Mammary epithelial cell (primary cell): ENCODE measurements at regions of chr5 and their contacts with region 1.

Region 1: DNA sequence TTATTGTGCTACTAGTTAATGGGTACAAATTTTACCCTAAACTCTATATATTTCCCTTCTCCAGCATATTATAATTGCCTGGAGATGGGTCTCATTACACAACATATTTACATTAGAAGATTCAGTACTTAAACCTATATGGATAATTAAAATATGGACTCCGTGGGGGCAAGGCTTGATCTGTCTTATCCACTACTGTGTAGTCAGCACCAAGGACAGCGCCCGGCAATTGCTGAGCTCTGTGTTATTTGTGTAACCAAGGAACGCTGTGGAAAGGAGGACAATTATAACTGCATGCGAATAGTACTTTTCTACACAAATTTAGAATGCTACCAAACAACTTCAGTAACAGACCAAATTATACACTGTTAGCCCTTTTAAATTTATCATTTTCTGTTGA is 77.7 kb downstream of the DNAH5 start:
- DNase-seq: peak; percentile 19
- H3K4me3 ChIP-seq: no peak overlapping the region
- H3K27ac ChIP-seq: no peak overlapping the region
- H3K4me1 ChIP-seq: no peaks in the 10 kb centered on the region
- H3K27me3 ChIP-seq: no peaks in the 10 kb centered on the region
- CTCF ChIP-seq: no peak

Region 2: DNA sequence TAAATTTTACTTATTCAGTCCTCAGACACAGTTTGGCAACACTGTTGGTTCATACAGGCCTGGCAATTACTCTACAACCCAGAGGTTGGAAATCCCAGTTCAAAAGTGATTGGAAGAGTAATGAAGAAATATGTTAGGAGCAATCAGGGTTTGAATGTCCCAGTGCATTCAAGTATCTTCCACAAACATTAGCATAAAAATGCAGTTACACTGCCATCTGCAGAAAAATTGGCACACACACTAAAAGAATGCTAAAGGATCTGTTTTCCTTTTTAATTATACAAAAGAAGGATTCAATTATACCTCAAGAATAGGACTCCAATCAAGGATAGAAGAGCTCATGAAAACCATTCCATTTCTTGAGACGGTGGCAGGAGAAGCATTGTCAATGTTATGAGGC is 52.5 kb before region 1 on chr5:
- CTCF ChIA-PET with region 1: no interaction called
- dilution Hi-C with region 1: no loop called
- in situ Hi-C with region 1: no loop called
- intact Hi-C with region 1: no loop called
- DNase-seq: peak; percentile 33
- H3K4me3 ChIP-seq: no peak overlapping the region
- H3K27ac ChIP-seq: no peak overlapping the region
- H3K4me1 ChIP-seq: peaks cover 2% of the 10 kb centered on the region
- H3K27me3 ChIP-seq: no peaks in the 10 kb centered on the region
- CTCF ChIP-seq: peak; percentile 22 to 47

Region 3: GRCh38 chr5:13910637-13911288 is 44.0 kb after region 1 on chr5:
- CTCF ChIA-PET with region 1: no interaction called
- dilution Hi-C with region 1: no loop called
- in situ Hi-C with region 1: no loop called
- intact Hi-C with region 1: loop called (anchors 5 kb)
- DNase-seq: no peak
- H3K4me3 ChIP-seq: no peak overlapping the region
- H3K27ac ChIP-seq: no peak overlapping the region
- H3K4me1 ChIP-seq: peaks cover 4% of the 10 kb centered on the region
- H3K27me3 ChIP-seq: no peaks in the 10 kb centered on the region
- CTCF ChIP-seq: no peak

Region 4: GRCh38 chr5:13957032-13957645 is 90.3 kb after region 1 on chr5:
- CTCF ChIA-PET with region 1: no interaction called
- dilution Hi-C with region 1: no loop called
- in situ Hi-C with region 1: no loop called
- intact Hi-C with region 1: no loop called
- DNase-seq: peak; percentile 59
- H3K4me3 ChIP-seq: no peak overlapping the region
- H3K27ac ChIP-seq: no peak overlapping the region
- H3K4me1 ChIP-seq: no peaks in the 10 kb centered on the region
- H3K27me3 ChIP-seq: no peaks in the 10 kb centered on the region
- CTCF ChIP-seq: peak; percentile 77 to 80